HCT116 (cell line): ENCODE measurements at regions of chrX and their contacts with region 1.

Region 1: DNA sequence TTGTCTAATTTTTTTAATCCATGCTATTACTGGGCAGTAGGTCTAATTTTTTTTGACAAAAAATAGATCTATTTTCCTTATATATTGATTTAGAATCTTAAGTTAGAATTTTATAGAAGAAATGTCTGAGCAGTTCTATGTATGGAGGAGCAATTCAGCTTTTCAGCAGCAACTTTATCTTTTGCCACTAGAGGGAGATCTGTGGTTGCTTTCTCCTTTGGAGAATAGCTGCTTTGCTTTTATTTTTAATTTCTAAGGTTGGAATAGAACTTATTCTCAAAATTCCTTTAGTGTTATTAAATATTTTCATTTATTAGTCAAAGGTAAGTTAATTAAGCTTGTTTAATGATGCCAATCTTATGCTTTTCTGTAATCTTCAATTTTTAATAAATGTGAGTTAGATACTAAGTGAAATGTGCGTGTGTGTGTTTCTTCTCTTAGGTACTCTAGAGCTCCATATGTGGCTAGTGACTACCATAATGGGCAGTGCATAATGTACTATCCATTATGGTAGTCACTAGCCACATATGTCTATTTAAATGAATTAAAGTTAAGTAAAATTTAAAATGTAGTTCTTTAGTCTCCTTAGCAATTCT is 29.3 kb downstream of the FAM199X start:
- DNase-seq: peak; percentile 1
- ATAC-seq: no peak; the same call in 1 of the 2 replicates
- H3K4me3 ChIP-seq: no peak overlapping the region
- H3K27ac ChIP-seq: no peak overlapping the region
- H3K4me1 ChIP-seq: no peaks in the 10 kb centered on the region
- H3K27me3 ChIP-seq: no peaks in the 10 kb centered on the region
- CTCF ChIP-seq: peak; percentile 21 to 47 (median 46); a peak in 4 of 6 replicates
- POLR2A ChIP-seq: no peak
- RAD21 ChIP-seq: peak; percentile 40; the same call in 1 of the 2 replicates

Region 2: DNA sequence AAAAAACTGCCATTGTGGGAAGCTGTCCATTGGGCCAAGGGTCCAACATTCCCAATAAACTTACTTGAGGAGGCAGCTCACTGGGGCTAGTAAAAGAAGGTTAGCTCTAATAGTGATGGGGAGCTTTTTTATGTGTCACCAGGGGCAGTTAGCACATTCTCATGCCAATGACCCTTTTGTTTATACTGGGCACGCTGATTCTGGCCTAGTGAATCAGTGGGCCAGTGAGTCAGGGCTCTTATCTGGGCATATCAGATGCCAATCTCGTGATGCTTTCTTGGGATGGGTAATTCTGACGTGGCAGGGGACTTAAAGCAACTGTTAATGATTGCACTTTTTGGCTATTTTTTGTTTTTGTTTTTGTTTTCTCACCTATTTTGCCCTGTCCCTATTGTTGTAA is 539.0 kb before region 1 on chrX:
- CTCF ChIA-PET with region 1: no interaction called
- POLR2A ChIA-PET with region 1: no interaction called
- RAD21 ChIA-PET with region 1: no interaction called
- intact Hi-C with region 1: no loop called
- DNase-seq: peak; percentile 60
- ATAC-seq: peak; percentile 91
- H3K4me3 ChIP-seq: no peak overlapping the region
- H3K27ac ChIP-seq: peak overlapping the region; percentile 44; the same call in 1 of the 2 replicates
- H3K4me1 ChIP-seq: peaks cover 11 to 27% of the 10 kb centered on the region in 2 experiments
- H3K27me3 ChIP-seq: no peaks in the 10 kb centered on the region
- CTCF ChIP-seq: no peak
- POLR2A ChIP-seq: no peak
- RAD21 ChIP-seq: no peak; the same call in 1 of the 2 replicates

Region 3: DNA sequence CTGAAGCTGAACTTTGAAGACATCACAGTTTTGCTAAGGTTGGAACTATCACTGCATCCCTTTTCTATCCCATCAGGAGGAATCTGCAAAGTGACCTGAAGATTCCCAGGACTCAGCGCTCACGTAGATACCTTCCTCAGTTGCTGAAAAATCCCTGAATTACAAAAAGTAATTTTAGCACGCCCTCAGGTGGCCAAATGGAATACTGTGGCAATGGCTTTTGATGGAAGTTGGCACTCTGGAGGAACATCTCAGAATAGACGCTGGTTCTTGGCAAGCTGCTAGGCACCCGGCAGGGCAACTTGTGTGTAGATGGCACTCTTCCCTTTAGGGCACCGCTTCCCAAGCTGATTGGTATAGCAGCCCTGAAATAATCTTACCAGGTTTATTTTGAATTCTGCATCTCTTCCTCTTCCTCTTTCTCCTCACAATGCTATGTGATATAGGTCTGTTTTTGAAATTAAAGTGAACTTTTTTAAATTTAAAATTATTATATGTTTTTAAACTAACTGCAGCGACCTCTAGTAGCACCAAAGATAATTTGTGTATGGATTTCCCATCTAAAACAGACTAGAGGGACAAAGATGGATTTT is 75.4 kb after region 1 on chrX:
- CTCF ChIA-PET with region 1: interaction called, 26 read pairs
- POLR2A ChIA-PET with region 1: no interaction called
- RAD21 ChIA-PET with region 1: no interaction called
- intact Hi-C with region 1: loop called (anchors 1 kb)
- DNase-seq: peak; percentile 50
- ATAC-seq: peak; percentile 97
- H3K4me3 ChIP-seq: no peak overlapping the region
- H3K27ac ChIP-seq: no peak overlapping the region
- H3K4me1 ChIP-seq: no peaks in the 10 kb centered on the region
- H3K27me3 ChIP-seq: no peaks in the 10 kb centered on the region
- CTCF ChIP-seq: peak; percentile 55 to 80 (median 63); a peak in 5 of 6 replicates
- POLR2A ChIP-seq: no peak
- RAD21 ChIP-seq: peak; percentile 75